Ascending aorta (tissue), 2 donors: ENCODE measurements at regions of chrX and their contacts with region 1.

Region 1: DNA sequence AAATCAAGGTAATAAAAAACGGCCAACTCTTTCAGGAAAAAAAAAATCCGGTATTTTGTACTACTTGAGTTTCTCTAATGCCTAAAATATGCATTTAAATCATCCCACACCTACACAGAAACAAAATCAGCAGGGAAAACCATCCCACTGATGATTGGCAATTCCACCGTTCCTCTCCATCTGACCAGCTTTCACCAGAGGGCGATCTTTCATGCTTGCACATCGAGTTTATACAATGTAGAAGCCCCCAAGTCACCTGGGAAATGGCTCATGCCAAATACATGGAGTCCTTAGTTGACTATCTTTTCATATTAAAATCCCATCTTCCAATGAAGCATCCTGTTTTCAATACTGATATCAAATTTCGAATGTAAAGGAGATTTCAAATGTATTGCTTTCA is 69.2 kb downstream of the PTCHD1 start:
- DNase-seq: no peak
- H3K4me3 ChIP-seq: no peak overlapping the region
- H3K27ac ChIP-seq: no peak overlapping the region
- H3K4me1 ChIP-seq: no peaks in the 10 kb centered on the region
- H3K27me3 ChIP-seq: no peaks in the 10 kb centered on the region
- CTCF ChIP-seq: no peak

Region 2: GRCh38 chrX:23554304-23554703 is 150.5 kb after region 1 on chrX:
- intact Hi-C with region 1: loop called (anchors 10 kb)
- DNase-seq: no peak
- H3K4me3 ChIP-seq: no peak overlapping the region
- H3K27ac ChIP-seq: no peak overlapping the region
- H3K4me1 ChIP-seq: no peaks in the 10 kb centered on the region
- H3K27me3 ChIP-seq: no peaks in the 10 kb centered on the region
- CTCF ChIP-seq: peak; percentile 9 to 54 (median 42)

Region 3: GRCh38 chrX:23578079-23578478 is 174.2 kb after region 1 on chrX:
- intact Hi-C with region 1: no loop called
- DNase-seq: no peak
- H3K4me3 ChIP-seq: no peak overlapping the region
- H3K27ac ChIP-seq: no peak overlapping the region
- H3K4me1 ChIP-seq: no peaks in the 10 kb centered on the region
- H3K27me3 ChIP-seq: no peaks in the 10 kb centered on the region
- CTCF ChIP-seq: no peak